ENCODE measurements at regions of chr6 and their contacts with region 1.

Region 1: GRCh38 chr6:46221222-46221793 is 50.5 kb upstream of the ENPP5 start:
- DNase-seq: no peak
- ATAC-seq: peak; percentile 49

Region 2: DNA sequence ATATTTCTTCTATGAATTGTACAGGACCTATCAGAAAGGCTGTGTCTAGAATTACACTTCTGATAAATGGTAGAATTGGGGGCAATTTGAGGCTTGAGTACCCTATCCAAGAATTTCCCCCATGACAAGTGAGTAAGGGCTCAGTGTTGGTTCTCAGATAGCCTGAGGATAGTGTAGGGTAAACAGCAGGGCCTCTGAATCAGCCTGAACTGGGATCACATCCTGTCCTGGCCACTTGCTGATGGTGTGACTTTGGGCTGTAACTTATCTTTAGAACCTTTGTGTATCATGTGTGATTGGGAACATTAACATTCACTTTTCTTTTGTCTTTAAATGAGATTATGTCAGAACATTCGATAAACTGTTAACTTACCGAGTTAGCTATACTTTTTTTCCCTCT is 356.7 kb before region 1 on chr6:
- intact Hi-C with region 1: no loop called
- DNase-seq: no peak
- ATAC-seq: no peak

Region 3: GRCh38 chr6:45986746-45987274 is 234.5 kb before region 1 on chr6:
- intact Hi-C with region 1: no loop called
- DNase-seq: no peak
- ATAC-seq: peak; percentile 89

Region 4: GRCh38 chr6:46090115-46091079 is 130.9 kb before region 1 on chr6:
- intact Hi-C with region 1: loop called (anchors 5 kb)
- DNase-seq: peak; percentile 69
- ATAC-seq: no peak

Region 5: DNA sequence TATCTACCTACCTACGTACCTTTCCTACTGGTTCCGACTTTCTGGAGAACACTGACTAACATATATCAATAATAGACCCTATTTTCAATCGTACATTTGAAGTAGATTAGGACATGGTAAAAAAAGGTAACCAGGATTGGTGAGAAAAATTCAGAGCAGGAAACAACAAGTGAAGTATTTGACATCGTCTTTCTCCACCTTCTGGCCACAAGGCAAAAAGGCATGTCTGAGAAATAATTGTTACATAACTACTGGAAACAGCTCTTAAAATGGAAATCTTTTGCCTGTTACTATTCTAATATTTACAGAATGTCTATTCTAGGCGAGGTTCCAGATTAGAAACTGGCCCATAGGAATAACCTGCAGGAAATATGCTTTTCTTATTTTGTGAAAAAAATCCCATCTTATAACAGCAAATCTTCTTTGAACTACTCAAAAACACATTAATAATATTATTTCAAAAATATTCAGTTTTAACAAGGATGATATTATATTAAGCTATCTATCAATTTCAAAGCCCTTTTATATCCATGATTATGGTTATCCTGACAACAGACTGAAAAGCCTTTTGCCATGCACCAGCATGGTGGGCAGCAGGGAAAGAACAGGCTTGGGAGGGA is 189.1 kb after region 1 on chr6:
- intact Hi-C with region 1: loop called (anchors 1 kb)
- DNase-seq: no peak
- ATAC-seq: no peak

Region 6: DNA sequence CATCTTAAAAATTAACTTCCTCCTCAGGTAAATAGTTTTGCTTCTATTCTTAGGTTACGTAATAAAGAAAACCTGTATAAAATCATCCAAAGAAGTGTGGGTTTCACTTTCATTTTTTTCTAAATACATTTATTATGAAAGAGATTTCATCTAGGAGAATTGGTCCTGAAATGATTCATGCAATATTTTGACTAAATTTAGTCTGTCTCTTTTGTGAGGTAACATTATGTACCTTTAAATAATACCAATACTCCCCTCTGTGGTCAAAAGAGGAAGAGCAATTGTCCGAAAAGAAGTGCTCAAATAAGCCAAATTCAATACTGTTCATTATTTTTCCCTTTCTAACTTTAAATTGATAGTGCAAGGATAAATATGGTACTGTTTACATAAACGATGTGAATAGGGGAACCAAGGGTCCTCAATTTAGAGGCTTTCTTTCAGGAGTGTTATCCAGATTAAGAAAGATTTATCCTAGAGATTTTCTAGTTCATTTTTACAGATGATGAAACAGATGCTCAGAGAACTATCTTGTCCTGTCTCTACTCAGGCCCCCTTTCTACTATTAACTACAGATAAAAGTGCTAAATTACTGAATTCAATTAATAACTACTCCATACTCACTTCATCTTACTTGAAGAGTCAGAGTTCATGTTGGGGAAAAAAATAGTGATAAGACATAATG is 405.1 kb after region 1 on chr6:
- intact Hi-C with region 1: loop called (anchors 5 kb)
- DNase-seq: no peak
- ATAC-seq: no peak